ENCODE measurements at regions of chr7 and their contacts with region 1.

Region 1: DNA sequence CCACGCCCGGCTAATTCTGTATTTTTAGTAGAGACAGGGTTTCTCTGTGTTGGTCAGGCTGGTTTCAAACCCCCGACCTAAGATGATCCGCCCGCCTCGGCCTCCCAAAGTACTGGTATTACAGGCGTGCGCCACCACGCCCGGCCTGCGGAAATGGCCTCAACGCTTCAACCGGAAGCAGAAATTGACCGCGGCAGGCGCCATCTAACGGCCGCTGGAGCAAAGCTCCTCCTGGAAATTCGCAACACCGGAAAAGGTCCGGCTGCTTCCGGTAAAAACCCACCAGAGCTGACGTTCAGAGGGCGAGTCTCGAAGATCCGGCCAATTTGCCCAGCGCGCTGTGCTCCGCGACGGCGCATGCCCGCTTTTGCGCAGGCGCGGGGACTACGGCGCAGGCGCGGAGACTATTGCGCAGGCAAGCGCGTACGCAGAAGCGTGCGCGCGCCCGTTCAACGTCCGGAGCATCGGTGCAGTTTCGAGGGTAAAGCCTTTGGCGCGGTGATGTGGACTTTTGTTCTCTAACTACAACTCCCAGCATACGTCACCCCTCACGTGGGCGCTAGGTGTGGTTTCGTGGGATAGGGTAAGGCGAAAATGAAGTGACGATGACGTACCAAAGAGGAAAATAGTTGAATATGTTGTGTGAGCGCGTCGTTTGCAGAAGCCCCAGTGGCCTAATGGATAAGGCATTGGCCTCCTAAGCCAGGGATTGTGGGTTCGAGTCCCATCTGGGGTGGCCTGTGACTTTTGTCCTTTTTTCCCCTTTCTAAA is 915 bp upstream of the FMC1 start:
- DNase-seq: peak; percentile 100
- ATAC-seq: peak; percentile 72
- H3K4me3 Mint-ChIP-seq: peak overlapping the region; percentile 82
- H3K27ac Mint-ChIP-seq: peak overlapping the region; percentile 99
- H3K4me1 Mint-ChIP-seq: peaks cover 24% of the 10 kb centered on the region
- H3K27me3 Mint-ChIP-seq: peaks cover 3% of the 10 kb centered on the region
- CTCF ChIP-seq: peak; percentile 67

Region 2: DNA sequence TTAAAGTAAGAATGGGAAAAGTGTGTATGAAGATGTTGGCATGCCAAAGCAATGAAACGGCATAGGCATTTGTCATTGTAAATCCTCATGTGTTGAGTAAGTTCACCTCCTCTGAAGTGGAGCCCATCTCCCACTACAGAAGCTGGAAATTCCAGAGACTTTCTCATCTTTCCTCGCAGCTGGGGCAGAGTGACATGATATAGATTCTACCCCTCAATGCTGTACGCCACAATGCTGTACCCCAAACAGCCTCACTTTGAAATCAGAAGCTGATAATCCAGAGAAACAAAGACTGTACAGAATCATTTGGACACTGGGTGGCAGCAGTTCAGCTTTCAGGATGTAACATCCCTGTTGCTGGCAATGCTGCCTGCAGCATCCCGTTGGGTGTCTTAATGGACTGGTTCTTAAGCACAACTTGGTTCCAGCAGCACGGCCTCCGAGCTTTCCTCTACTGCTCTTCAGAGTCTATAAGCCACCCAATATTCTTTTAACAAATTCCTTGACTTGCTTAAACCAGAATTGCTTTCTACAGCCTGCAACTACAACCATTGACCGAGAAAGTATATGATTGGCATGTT is 323.2 kb before region 1 on chr7:
- CTCF ChIA-PET with region 1: no interaction called
- POLR2A ChIA-PET with region 1: no interaction called
- intact Hi-C with region 1: loop called (anchors 10 kb)
- DNase-seq: peak; percentile 79
- ATAC-seq: peak; percentile 94
- H3K4me3 Mint-ChIP-seq: no peak overlapping the region
- H3K27ac Mint-ChIP-seq: no peak overlapping the region
- H3K4me1 Mint-ChIP-seq: peaks cover 6% of the 10 kb centered on the region
- H3K27me3 Mint-ChIP-seq: no peaks in the 10 kb centered on the region
- CTCF ChIP-seq: peak; percentile 77

Region 3: DNA sequence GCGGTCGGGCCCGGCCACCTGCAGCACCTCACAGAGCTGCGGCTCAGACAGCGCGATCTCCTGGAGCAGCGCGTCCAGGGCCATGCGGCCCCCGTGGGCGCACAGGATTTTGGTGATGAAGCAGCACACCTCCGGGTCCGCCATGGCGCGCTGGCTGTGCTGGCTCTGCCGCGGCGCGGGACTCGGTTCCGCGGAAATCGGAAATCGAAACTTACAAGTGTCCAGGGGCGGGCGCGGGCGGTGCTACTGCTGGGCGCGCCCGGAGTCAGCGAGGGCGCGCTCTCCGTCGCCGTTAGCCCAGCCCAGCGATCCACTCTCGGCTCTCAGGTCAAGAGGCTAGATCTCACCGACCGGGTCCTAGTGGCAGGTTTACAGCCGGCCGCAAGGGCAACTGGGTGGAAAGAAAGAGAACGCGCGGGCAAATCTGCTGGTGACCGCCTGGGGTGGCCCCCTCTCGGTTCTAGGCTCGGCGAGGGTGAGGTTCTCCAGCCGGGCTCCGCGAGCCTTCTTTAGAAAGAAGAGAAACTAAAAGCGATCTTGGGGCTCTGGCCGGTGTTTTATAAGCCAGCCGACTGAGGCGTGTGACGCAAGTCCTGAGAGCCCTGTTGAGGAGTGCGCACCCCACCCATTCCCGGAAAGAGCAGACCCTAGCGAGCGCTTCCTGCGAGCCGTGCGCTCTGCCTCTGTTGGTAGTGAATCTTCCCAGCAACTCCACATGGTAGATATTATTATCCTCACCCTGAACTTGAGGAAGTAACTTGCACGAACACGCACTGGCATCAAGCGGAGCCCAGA is 230.8 kb before region 1 on chr7 and contains the start of gene ZC3HAV1:
- CTCF ChIA-PET with region 1: no interaction called
- POLR2A ChIA-PET with region 1: no interaction called
- intact Hi-C with region 1: loop called (anchors 5 kb)
- DNase-seq: peak; percentile 93
- ATAC-seq: peak; percentile 79
- H3K4me3 Mint-ChIP-seq: peak within 1 kb of the TSS; percentile 85
- H3K27ac Mint-ChIP-seq: peak within 1 kb of the TSS; percentile 96
- H3K4me1 Mint-ChIP-seq: peaks cover 32% of the 10 kb centered on the region
- H3K27me3 Mint-ChIP-seq: no peaks in the 10 kb centered on the region
- CTCF ChIP-seq: no peak
- total RNA-seq, gene ZC3HAV1: 125 to 128 TPM

Region 4: DNA sequence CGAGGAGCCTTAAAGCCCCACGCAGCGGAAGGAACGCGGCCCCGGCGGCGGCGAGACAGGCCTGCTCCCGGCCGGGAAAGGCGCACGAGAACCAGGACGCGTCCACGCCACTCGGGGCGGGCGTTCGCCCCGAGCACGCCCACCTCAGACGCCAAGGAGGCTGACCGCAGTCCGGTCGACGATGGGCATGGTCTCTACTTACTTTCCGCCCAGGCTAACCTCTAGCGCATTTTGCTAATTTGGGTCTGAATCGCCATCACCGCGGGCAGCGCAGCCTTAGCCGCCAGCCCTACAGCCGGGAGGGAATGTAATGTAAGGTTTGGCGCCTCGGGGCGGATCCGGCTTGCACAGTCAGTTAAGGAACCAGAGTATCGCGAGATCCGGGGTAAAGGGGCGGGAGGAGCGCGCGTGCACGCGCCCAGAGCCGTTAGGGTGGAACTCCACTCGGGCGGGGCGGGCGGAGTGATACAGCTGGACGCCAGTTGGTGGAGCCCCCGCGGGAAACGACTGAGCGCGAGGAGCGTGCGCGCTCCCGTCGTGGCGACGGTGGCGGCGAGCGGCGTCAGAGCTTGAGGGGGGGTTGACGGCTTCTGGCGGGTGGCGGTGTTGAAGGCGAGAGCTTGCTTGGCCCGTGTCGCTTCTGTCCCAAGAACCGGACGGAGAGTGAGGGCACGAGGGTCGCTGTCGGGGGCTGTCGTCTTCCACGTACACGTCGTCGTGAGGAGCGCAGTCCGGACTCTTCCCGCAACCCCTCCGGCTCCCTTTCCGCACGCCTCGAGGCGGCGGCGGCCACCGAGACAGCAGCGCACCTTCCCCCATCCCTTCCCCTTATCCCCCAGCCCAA is 19.4 kb after region 1 on chr7 and contains the start of gene LUC7L2:
- CTCF ChIA-PET with region 1: interaction called, 5 read pairs
- POLR2A ChIA-PET with region 1: interaction called, 39 read pairs
- intact Hi-C with region 1: loop called (anchors 1 kb)
- DNase-seq: peak; percentile 100
- ATAC-seq: peak; percentile 76
- H3K4me3 Mint-ChIP-seq: peak within 1 kb of the TSS; percentile 92
- H3K27ac Mint-ChIP-seq: peak within 1 kb of the TSS; percentile 98
- H3K4me1 Mint-ChIP-seq: peaks cover 28% of the 10 kb centered on the region
- H3K27me3 Mint-ChIP-seq: no peaks in the 10 kb centered on the region
- CTCF ChIP-seq: no peak
- total RNA-seq, gene LUC7L2: 133 to 140 TPM

Measured in activated CD8-positive, alpha-beta T cell treated with anti-CD3 and anti-CD28 coated beads for 36 hours (primary cell).